ENCODE measurements at regions of chr11 and their contacts with region 1.

Region 1: GRCh38 chr11:18321980-18322711 is at the starts of genes GTF2H1 and HPS5:
- DNase-seq: peak; percentile 98
- ATAC-seq: peak; percentile 100
- H3K4me3 ChIP-seq: peak within 1 kb of the TSS; percentile 64 to 86
- H3K27ac ChIP-seq: peak within 1 kb of the TSS; percentile 63 to 83
- H3K4me1 ChIP-seq: peaks cover 2 to 19% of the 10 kb centered on the region in 2 donors
- H3K27me3 ChIP-seq: no peaks in the 10 kb centered on the region
- total RNA-seq, gene GTF2H1: 39.3 to 53.3 TPM
- total RNA-seq, gene HPS5: 22.6 to 25.5 TPM

Region 2: DNA sequence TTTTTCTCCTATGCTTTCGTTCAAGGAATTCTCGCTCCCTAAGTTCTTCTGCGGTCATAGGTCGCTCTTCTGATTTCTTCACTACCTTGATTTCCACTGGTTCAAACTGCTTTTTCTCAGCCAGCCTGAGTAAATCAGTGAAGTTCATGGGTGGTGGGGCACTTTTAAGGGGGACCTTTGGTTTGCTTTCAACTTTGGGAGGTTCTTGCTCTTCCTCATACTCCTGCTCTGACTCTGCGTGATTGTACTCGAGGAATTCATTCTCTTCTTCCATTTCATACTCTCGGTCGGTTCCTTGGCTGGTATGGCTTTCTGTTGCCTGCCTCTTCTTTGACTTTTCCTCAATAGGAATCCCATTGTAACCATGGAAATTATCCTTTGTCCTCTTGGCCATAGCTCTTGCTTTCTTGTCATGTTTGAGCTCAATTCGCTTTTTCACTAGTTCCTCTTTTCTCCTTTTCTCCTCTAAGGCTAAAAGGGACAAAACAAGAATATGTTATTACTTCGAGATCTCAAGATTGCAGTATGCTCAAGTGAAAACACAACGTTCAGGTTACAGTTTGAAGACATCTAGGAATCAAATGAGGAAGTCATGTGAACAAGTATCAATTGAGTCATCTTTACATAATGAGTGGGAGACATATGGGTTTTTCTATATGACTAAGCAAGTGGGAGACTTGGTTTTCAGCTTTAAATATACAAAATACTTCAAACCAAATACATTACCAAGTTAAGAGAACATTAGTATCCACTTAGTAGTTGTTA is 293.7 kb after region 1 on chr11:
- intact Hi-C with region 1: loop called in 1 of 2 experiments (anchors 10 kb)
- DNase-seq: no peak
- ATAC-seq: no peak
- H3K4me3 ChIP-seq: no peak overlapping the region
- H3K27ac ChIP-seq: no peak overlapping the region
- H3K4me1 ChIP-seq: peaks cover 0 to 1% of the 10 kb centered on the region in 2 donors
- H3K27me3 ChIP-seq: no peaks in the 10 kb centered on the region

Measured in aorta (tissue), 5 donors.